Testis (tissue), 5 donors: ENCODE measurements at regions of chr1 and their contacts with region 1.

Region 1: GRCh38 chr1:87328272-87329050 is at the start of gene LMO4:
- DNase-seq: peak; percentile 98
- H3K4me3 ChIP-seq: peak within 1 kb of the TSS; percentile 91 to 97
- H3K27ac ChIP-seq: peak within 1 kb of the TSS; percentile 96 to 97
- H3K4me1 ChIP-seq: peaks cover 6% of the 10 kb centered on the region
- H3K27me3 ChIP-seq: no peaks in the 10 kb centered on the region
- CTCF ChIP-seq: peak in 2 of 3 experiments; percentile 32 to 45
- POLR2A ChIP-seq: peak; percentile 73
- total RNA-seq, gene LMO4: 38.3 to 65.6 TPM

Region 2: DNA sequence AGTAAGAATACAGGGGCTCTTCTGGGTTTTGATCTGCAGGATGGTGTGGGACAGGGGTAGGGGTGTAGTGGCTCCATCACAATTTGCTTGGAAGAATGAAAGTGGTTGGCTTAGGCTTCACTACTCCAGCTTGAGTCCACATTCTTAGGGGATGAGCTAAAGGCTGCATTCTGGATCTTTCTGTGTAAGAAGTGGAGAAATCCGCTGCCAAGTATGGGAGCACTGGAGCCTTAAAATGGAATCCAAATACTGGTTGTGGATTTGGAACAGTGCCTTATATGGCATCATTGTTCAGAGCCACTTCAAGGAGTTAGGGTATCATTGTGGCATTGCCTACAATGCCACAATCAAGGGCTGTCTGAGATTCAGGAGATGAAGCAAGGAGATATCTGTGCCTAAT is 187.3 kb after region 1 on chr1:
- intact Hi-C with region 1: no loop called
- DNase-seq: no peak
- H3K4me3 ChIP-seq: no peak overlapping the region
- H3K27ac ChIP-seq: no peak overlapping the region
- H3K4me1 ChIP-seq: no peaks in the 10 kb centered on the region
- H3K27me3 ChIP-seq: no peaks in the 10 kb centered on the region
- CTCF ChIP-seq: no peak
- POLR2A ChIP-seq: no peak

Region 3: GRCh38 chr1:87953732-87954344 is 625.4 kb after region 1 on chr1:
- intact Hi-C with region 1: loop called (anchors 5 kb)
- DNase-seq: peak; percentile 76
- H3K4me3 ChIP-seq: no peak overlapping the region
- H3K27ac ChIP-seq: no peak overlapping the region
- H3K4me1 ChIP-seq: no peaks in the 10 kb centered on the region
- H3K27me3 ChIP-seq: no peaks in the 10 kb centered on the region
- CTCF ChIP-seq: peak in 2 of 3 experiments; percentile 48 to 54
- POLR2A ChIP-seq: no peak